A673 (cell line): ENCODE measurements at regions of chr2 and their contacts with region 1.

Region 1: DNA sequence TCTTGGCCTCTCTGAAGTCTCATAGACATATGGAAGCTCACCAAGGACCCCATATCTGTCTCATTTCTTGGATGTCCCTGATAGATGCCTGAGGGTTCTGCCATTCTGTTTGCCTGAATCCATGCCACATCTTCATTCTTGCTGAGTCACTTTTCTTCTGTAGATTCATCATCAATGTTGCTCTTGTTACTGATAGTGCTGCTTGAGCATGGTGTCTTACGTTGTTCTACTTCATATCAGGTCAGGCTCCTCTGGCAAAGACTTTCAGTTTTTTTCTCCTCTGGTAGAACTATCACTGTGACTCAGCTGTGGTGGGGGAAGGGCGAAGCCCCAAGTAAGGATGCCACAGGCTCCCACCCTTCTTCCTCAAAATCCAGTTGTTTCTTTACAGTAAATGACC is 885.2 kb downstream of the DCDC2C start:
- DNase-seq: peak; percentile 65
- H3K4me3 ChIP-seq: peak overlapping the region; percentile 38
- H3K27ac ChIP-seq: peak overlapping the region; percentile 97
- H3K4me1 ChIP-seq: peaks cover 38% of the 10 kb centered on the region
- H3K27me3 ChIP-seq: no peaks in the 10 kb centered on the region
- CTCF ChIP-seq: no peak

Region 2: GRCh38 chr2:3738454-3738853 is 850.2 kb before region 1 on chr2:
- CTCF ChIA-PET with region 1: no interaction called
- POLR2A ChIA-PET with region 1: interaction called, 13 read pairs
- intact Hi-C with region 1: no loop called
- DNase-seq: peak; percentile 85
- H3K4me3 ChIP-seq: no peak overlapping the region
- H3K27ac ChIP-seq: no peak overlapping the region
- H3K4me1 ChIP-seq: peaks cover 18% of the 10 kb centered on the region
- H3K27me3 ChIP-seq: no peaks in the 10 kb centered on the region
- CTCF ChIP-seq: peak; percentile 70

Region 3: DNA sequence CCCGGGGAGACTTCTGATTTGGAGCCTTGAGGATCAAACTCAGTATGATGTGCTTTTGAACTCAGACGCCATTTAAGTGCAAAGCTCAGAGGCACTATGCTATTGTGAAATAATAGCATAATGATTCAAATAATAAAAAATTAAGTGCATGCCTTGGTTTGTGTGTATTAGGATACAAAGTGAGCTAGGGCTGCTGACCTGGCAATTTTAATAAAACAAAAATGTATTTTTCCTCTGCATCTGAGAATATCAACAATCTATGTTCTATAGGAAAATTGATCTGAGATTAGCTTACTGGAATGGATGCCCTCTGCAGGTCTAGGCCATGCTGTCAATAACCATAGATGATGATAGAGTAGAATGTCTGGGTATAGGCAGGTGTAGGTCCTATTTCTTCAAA is 606.4 kb before region 1 on chr2:
- CTCF ChIA-PET with region 1: no interaction called
- POLR2A ChIA-PET with region 1: interaction called, 17 read pairs
- intact Hi-C with region 1: loop called (anchors 5 kb)
- DNase-seq: no peak
- H3K4me3 ChIP-seq: no peak overlapping the region
- H3K27ac ChIP-seq: no peak overlapping the region
- H3K4me1 ChIP-seq: peaks cover 6% of the 10 kb centered on the region
- H3K27me3 ChIP-seq: no peaks in the 10 kb centered on the region
- CTCF ChIP-seq: no peak

Region 4: DNA sequence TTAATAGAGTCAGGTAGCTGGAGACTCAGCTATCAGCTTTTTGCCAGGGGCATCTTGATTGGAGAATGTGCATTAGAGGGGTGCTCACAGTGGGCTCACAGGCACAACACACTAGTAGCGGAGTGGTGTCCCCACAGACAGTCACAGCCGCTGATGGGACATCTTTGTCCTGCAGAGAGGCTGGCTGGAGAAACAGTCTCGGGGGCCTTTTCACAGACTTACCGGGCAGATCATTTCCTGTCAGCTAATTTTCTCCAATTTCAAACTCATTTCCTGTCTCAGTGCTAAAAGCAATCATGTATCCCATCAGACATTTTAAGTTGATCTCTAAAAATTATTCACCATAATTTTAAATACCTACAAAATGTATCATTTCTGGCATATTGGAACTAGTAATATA is 322.7 kb before region 1 on chr2:
- CTCF ChIA-PET with region 1: no interaction called
- POLR2A ChIA-PET with region 1: no interaction called
- intact Hi-C with region 1: loop called (anchors 2 kb)
- DNase-seq: peak; percentile 76
- H3K4me3 ChIP-seq: no peak overlapping the region
- H3K27ac ChIP-seq: peak overlapping the region; percentile 15
- H3K4me1 ChIP-seq: peaks cover 43% of the 10 kb centered on the region
- H3K27me3 ChIP-seq: no peaks in the 10 kb centered on the region
- CTCF ChIP-seq: no peak

Region 5: DNA sequence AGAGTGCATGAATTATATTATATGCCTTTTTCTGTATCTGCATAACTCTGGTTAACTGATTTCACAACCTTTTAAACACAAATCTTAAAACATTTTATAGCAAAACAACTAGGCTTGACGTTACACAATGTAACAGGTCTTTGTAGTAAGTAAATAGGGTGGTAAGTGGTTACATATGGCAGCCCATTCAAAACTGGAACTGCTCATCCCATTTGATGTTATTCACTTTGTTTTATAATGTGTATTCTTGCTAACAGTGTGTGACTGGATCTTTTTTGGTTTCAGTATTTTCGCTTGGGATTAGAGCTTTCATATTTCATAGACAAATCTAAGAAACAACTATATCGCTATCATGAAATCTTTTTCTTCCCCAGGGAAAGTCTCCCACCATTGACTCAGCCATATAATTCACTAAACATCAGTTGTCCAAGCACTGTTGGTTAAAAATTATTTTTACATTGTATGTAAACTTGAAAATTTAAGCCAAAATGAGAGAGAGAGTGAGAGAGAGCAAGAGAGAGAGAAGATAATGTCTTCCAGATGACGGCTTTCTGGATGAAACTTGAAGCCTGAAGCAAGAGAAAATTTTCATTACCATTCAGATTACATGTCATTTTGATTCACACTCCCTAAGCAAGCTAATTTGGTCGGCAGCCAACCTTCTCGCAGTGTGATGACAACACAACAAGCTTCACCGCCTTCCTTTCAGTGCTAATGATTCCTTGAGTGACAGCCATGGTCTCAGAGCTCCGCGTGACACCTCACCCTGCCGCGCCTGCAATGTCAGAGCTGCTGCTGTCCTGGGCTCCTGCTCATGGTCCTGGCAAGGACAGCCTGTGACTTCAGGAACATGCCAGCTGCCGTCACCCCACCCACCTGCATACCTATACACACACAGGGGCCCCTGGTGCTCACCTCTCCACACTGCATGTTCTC is 156.7 kb after region 1 on chr2:
- CTCF ChIA-PET with region 1: no interaction called
- POLR2A ChIA-PET with region 1: no interaction called
- intact Hi-C with region 1: loop called (anchors 5 kb)
- DNase-seq: peak; percentile 98
- H3K4me3 ChIP-seq: peak overlapping the region; percentile 22
- H3K27ac ChIP-seq: peak overlapping the region; percentile 94
- H3K4me1 ChIP-seq: peaks cover 48% of the 10 kb centered on the region
- H3K27me3 ChIP-seq: no peaks in the 10 kb centered on the region
- CTCF ChIP-seq: no peak

Region 6: DNA sequence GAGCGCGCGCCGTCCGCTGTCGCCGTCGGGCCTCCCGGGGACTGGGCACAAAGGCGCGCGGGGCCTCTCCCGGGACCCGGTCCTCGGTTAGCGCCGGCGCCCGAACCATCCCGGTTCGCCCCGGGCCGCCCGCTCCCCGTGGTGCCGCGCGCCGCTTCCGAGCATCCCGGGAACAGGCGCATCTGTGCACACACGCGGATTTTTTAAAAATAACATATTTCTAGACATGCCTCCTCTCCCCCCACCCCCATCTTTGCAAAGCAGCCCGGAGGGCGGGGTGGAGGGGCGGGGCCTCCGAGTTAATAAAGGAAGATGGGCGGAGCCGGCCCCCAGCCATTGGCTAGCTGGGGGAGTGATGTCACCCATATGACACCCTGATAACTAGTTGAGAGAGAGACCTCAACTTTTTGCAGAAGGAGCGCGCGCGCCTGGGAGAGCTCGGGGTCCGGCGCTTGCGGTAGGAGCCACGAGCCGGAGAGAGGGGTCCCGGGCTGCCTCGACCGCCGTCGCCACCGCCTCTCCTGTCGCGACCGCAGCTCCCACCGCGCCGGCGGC is 1103.4 kb after region 1 on chr2 and contains the start of gene SOX11:
- CTCF ChIA-PET with region 1: no interaction called
- POLR2A ChIA-PET with region 1: no interaction called
- intact Hi-C with region 1: loop called (anchors 10 kb)
- DNase-seq: peak; percentile 96
- H3K4me3 ChIP-seq: peak within 1 kb of the TSS; percentile 86
- H3K27ac ChIP-seq: peak within 1 kb of the TSS; percentile 91
- H3K4me1 ChIP-seq: no peaks in the 10 kb centered on the region
- H3K27me3 ChIP-seq: no peaks in the 10 kb centered on the region
- CTCF ChIP-seq: no peak
- total RNA-seq, gene SOX11: 73.9 and 75.1 TPM in 2 replicates